ENCODE measurements at regions of chr15 and their contacts with region 1.

Region 1: DNA sequence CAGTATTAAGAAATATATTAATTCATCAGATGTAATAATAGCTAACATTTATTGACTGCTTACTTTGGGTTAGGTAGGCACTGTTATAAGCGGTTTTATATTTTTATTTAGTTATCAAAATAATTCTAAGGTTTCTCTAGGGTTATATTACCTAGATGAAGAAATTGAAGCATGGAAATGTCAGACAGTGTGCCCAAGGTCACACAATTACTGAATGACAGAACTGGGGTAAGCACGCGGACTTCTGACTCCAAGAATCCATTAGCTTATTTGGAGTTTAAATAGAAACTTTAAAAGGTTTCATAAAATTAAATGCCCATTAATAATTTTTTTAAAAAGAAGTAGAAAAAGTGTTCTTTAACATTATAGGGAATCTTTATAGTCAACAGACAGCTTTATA is 74.3 kb downstream of the CALML4 start:
- DNase-seq: no peak
- H3K4me3 ChIP-seq: no peak overlapping the region
- H3K4me3 Mint-ChIP-seq: no peak overlapping the region
- H3K27ac Mint-ChIP-seq: no peak overlapping the region
- H3K4me1 ChIP-seq: no peaks in the 10 kb centered on the region
- H3K4me1 Mint-ChIP-seq: peaks cover 8% of the 10 kb centered on the region
- H3K27me3 ChIP-seq: no peaks in the 10 kb centered on the region
- H3K27me3 Mint-ChIP-seq: no peaks in the 10 kb centered on the region
- CTCF ChIP-seq: no peak

Region 2: DNA sequence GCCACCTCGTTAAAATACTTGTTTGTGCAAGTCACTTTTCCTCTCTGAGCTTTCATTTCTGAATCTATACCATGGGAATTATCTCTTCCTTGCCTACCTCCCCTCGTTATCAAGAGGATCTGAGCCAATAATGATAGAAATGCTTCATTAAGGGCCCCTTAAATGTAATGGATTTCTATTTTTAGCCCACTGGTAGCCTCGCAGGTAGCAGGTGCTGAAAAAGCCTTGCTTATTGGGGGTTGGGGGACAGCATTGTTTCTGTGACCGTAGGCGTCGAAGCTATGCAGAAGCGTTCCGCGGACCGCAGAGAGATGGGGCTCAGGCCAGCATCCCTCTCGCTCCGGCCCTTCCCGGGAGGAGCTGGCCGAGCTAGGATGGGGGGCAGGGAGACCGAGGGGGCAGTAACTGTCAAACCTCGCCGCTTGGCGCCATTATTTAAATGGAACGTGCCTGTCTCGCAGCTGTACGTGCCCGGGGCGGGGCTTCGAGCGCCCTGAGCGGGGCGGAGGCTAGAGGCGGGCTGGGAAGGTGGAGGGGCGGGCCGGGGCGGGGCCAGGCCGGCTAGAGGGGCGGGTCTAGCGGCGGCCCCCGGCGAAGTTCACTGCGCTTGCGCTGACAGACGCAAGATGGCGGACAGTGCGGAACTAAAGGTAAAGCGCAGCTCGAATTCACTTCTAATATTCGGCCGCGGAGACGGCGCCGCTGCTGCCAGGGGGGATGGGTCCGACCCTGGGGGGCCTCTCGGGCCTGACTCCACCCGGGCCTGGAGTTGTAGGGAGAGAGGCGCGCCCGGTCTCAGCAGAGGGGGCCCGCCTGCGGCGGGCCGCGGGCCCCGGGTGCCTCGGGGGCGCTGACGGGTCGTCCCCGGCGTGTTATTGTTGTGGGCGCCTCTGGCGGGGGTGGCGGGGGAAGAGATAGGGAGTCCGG is 76.9 kb before region 1 on chr15 and contains the start of gene PIAS1:
- CTCF ChIA-PET with region 1: no interaction called
- POLR2A ChIA-PET with region 1: no interaction called
- intact Hi-C with region 1: no loop called
- DNase-seq: peak; percentile 97
- H3K4me3 ChIP-seq: peak within 1 kb of the TSS; percentile 89
- H3K4me3 Mint-ChIP-seq: peak within 1 kb of the TSS; percentile 84
- H3K27ac Mint-ChIP-seq: peak within 1 kb of the TSS; percentile 60
- H3K4me1 ChIP-seq: peaks cover 39% of the 10 kb centered on the region
- H3K4me1 Mint-ChIP-seq: peaks cover 31% of the 10 kb centered on the region
- H3K27me3 ChIP-seq: no peaks in the 10 kb centered on the region
- H3K27me3 Mint-ChIP-seq: no peaks in the 10 kb centered on the region
- CTCF ChIP-seq: peak in 1 of 2 experiments; percentile 12
- total RNA-seq, gene PIAS1: 43.1 and 48.0 TPM in 2 replicates

Region 3: DNA sequence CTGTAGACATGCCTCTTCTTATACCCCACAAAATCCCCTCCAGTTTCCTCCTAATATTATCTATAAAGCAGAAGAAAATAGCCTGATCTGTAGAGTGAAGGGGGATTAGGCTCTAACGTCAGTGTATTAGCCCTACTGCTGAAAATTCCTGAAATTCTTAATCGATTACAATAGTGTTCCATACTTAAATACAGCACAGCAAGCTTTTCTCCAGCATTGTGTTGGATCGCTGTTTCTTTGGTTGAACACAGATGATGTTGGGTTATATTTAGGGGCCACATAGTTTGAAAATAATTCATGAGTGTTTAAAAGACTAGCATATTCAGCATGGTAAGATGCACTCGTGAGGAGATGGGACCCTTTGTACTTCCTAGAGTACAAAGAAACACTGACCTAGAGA is 24.2 kb before region 1 on chr15:
- CTCF ChIA-PET with region 1: no interaction called
- POLR2A ChIA-PET with region 1: interaction called, 18 read pairs
- intact Hi-C with region 1: no loop called
- DNase-seq: no peak
- H3K4me3 ChIP-seq: no peak overlapping the region
- H3K4me3 Mint-ChIP-seq: no peak overlapping the region
- H3K27ac Mint-ChIP-seq: peak overlapping the region; percentile 71
- H3K4me1 ChIP-seq: peaks cover 26% of the 10 kb centered on the region
- H3K4me1 Mint-ChIP-seq: peaks cover 28% of the 10 kb centered on the region
- H3K27me3 ChIP-seq: no peaks in the 10 kb centered on the region
- H3K27me3 Mint-ChIP-seq: no peaks in the 10 kb centered on the region
- CTCF ChIP-seq: no peak

Region 4: GRCh38 chr15:68441045-68441743 is 310.3 kb after region 1 on chr15:
- CTCF ChIA-PET with region 1: no interaction called
- POLR2A ChIA-PET with region 1: no interaction called
- intact Hi-C with region 1: no loop called
- DNase-seq: no peak
- H3K4me3 ChIP-seq: no peak overlapping the region
- H3K4me3 Mint-ChIP-seq: no peak overlapping the region
- H3K27ac Mint-ChIP-seq: no peak overlapping the region
- H3K4me1 ChIP-seq: no peaks in the 10 kb centered on the region
- H3K4me1 Mint-ChIP-seq: no peaks in the 10 kb centered on the region
- H3K27me3 ChIP-seq: no peaks in the 10 kb centered on the region
- H3K27me3 Mint-ChIP-seq: peaks cover 20% of the 10 kb centered on the region
- CTCF ChIP-seq: no peak

Measured in Caco-2 (cell line).